CD8-positive, alpha-beta T cell (primary cell): ENCODE measurements at regions of chr7 and their contacts with region 1.

Region 1: DNA sequence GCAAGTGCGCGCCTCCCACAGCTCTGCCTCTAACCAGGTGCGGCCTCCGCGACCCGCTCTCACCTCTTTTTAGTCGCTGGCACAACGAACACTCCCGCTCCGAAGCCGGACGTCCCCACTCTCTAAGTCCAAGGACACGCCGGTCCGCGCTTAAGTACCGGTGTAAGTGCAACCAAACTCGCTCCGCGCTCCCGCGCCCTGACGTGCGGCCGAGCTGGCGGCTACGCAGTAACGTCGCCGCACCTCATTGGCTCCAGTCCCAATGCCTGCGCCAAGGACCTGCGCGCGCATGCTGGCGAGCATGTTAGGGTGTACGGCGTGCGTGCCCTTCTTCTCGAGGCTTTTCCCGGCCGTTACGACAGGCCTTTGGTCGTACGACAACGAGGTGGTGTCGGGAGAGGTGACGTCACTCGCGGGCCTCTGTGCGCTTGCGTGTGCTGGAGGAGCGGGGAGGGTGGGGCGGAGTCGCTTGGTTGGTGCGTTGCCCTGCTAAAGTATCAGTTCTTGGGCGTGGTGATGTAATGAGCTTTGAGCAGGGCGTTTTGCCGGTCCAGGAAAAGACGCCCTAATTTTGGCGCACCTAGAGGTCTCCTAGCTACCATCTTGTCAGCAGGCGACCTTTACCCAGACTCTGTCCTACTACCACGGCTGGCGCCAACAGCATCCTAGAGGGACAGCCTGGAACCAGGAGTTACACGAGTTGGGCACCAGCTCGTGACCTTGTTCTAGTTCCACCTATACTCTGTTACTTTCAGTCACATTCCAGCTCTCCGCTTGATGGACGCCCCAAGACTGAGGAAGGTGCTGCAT is at the start of gene CYCS:
- DNase-seq: peak; percentile 99 to 100 (median 99)
- ATAC-seq: peak; percentile 92
- H3K4me3 ChIP-seq: peak within 1 kb of the TSS; percentile 84 to 86
- H3K4me3 Mint-ChIP-seq: peak within 1 kb of the TSS; percentile 97
- H3K27ac ChIP-seq: peak within 1 kb of the TSS; percentile 96 to 97
- H3K27ac Mint-ChIP-seq: peak within 1 kb of the TSS; percentile 99
- H3K4me1 ChIP-seq: peaks cover 12% of the 10 kb centered on the region
- H3K4me1 Mint-ChIP-seq: peaks cover 22% of the 10 kb centered on the region
- H3K27me3 ChIP-seq: no peaks in the 10 kb centered on the region
- H3K27me3 Mint-ChIP-seq: no peaks in the 10 kb centered on the region
- CTCF ChIP-seq: no peak
- total RNA-seq, gene CYCS: 135 to 140 TPM

Region 2: GRCh38 chr7:23539494-23539907 is 1585.8 kb before region 1 on chr7:
- CTCF ChIA-PET with region 1: no interaction called
- POLR2A ChIA-PET with region 1: no interaction called
- intact Hi-C with region 1: loop called in 1 of 2 experiments (anchors 2 kb)
- DNase-seq: peak in 1 of 9 experiments; percentile 49
- ATAC-seq: peak; percentile 79
- H3K4me3 ChIP-seq: peak overlapping the region; percentile 14 to 31
- H3K4me3 Mint-ChIP-seq: peak overlapping the region; percentile 70
- H3K27ac ChIP-seq: peak overlapping the region in 1 of 2 experiments; percentile 62
- H3K27ac Mint-ChIP-seq: peak overlapping the region; percentile 80
- H3K4me1 ChIP-seq: peaks cover 16% of the 10 kb centered on the region
- H3K4me1 Mint-ChIP-seq: peaks cover 15% of the 10 kb centered on the region
- H3K27me3 ChIP-seq: no peaks in the 10 kb centered on the region
- H3K27me3 Mint-ChIP-seq: no peaks in the 10 kb centered on the region
- CTCF ChIP-seq: no peak

Region 3: GRCh38 chr7:25098096-25099046 is 27.0 kb before region 1 on chr7:
- CTCF ChIA-PET with region 1: interaction called, 12 read pairs
- POLR2A ChIA-PET with region 1: interaction called, 4 read pairs
- intact Hi-C with region 1: no loop called
- DNase-seq: peak; percentile 20 to 81 (median 57)
- ATAC-seq: peak; percentile 85
- H3K4me3 ChIP-seq: no peak overlapping the region
- H3K4me3 Mint-ChIP-seq: no peak overlapping the region
- H3K27ac ChIP-seq: no peak overlapping the region
- H3K27ac Mint-ChIP-seq: no peak overlapping the region
- H3K4me1 ChIP-seq: peaks cover 3% of the 10 kb centered on the region
- H3K4me1 Mint-ChIP-seq: peaks cover 4% of the 10 kb centered on the region
- H3K27me3 ChIP-seq: no peaks in the 10 kb centered on the region
- H3K27me3 Mint-ChIP-seq: peaks cover 2% of the 10 kb centered on the region
- CTCF ChIP-seq: peak; percentile 85

Region 4: GRCh38 chr7:25179771-25180591 is 54.6 kb after region 1 on chr7:
- CTCF ChIA-PET with region 1: no interaction called
- POLR2A ChIA-PET with region 1: interaction called, 11 read pairs
- intact Hi-C with region 1: loop called (anchors 1 kb)
- DNase-seq: peak; percentile 92 to 99 (median 95)
- ATAC-seq: peak; percentile 98
- H3K4me3 ChIP-seq: peak overlapping the region; percentile 64 to 70
- H3K4me3 Mint-ChIP-seq: peak overlapping the region; percentile 91
- H3K27ac ChIP-seq: peak overlapping the region; percentile 57 to 83
- H3K27ac Mint-ChIP-seq: peak overlapping the region; percentile 92
- H3K4me1 ChIP-seq: peaks cover 7% of the 10 kb centered on the region
- H3K4me1 Mint-ChIP-seq: peaks cover 22% of the 10 kb centered on the region
- H3K27me3 ChIP-seq: no peaks in the 10 kb centered on the region
- H3K27me3 Mint-ChIP-seq: peaks cover under 1% of the 10 kb centered on the region
- CTCF ChIP-seq: peak; percentile 91

Region 5: DNA sequence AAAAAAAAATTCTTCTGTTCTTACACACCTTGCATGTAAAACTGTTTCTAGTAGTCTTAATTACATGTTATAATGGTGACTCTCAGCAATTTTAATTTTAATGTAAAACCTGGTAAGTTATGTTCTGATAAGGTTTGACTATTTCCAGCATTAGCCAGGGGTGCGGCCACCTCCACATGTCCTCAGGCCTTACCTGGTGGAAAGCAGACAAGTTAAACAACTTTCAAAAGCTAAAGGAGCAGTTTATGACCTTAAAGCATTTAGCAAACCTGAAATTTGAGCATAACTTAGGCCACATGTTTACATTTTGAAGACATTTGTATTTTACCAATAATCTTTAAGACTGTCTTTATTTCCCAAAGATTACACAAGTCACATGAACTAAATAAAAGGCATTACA is 66.3 kb after region 1 on chr7:
- CTCF ChIA-PET with region 1: no interaction called
- POLR2A ChIA-PET with region 1: no interaction called
- intact Hi-C with region 1: no loop called
- DNase-seq: no peak
- ATAC-seq: no peak
- H3K4me3 ChIP-seq: no peak overlapping the region
- H3K4me3 Mint-ChIP-seq: no peak overlapping the region
- H3K27ac ChIP-seq: no peak overlapping the region
- H3K27ac Mint-ChIP-seq: no peak overlapping the region
- H3K4me1 ChIP-seq: no peaks in the 10 kb centered on the region
- H3K4me1 Mint-ChIP-seq: no peaks in the 10 kb centered on the region
- H3K27me3 ChIP-seq: peaks cover 0 to 2% of the 10 kb centered on the region in 2 experiments
- H3K27me3 Mint-ChIP-seq: peaks cover 14% of the 10 kb centered on the region
- CTCF ChIP-seq: no peak